ENCODE measurements at regions of chr12 and their contacts with region 1.

Region 1: GRCh38 chr12:57418255-57418654 is 12.6 kb downstream of the R3HDM2 start:
- DNase-seq: no peak
- H3K4me3 Mint-ChIP-seq: no peak overlapping the region
- H3K27ac Mint-ChIP-seq: no peak overlapping the region
- H3K4me1 Mint-ChIP-seq: peaks cover 27% of the 10 kb centered on the region
- H3K27me3 Mint-ChIP-seq: no peaks in the 10 kb centered on the region
- CTCF ChIP-seq: no peak

Region 2: DNA sequence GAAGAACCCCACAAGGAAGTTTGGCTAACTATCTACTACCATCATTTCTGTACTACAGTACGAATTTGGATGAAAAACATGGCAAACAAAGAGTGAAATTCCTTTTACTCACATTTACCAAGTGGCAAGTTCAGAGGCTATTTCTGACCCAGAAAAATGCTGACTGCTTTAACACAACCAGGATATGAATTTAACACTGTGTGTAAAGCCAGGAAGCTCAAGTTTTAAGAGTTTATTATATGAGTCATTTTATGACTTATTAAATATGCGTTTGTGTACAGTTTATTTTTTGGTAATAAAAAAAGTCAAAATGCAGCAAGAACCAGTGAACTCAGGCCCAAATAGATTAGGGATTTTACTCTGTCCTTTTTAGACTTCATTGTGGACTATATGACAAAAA is 108.8 kb before region 1 on chr12:
- CTCF ChIA-PET with region 1: interaction called, 12 read pairs
- POLR2A ChIA-PET with region 1: no interaction called
- intact Hi-C with region 1: no loop called
- DNase-seq: no peak
- H3K4me3 Mint-ChIP-seq: no peak overlapping the region
- H3K27ac Mint-ChIP-seq: peak overlapping the region; percentile 66
- H3K4me1 Mint-ChIP-seq: peaks cover 13% of the 10 kb centered on the region
- H3K27me3 Mint-ChIP-seq: no peaks in the 10 kb centered on the region
- CTCF ChIP-seq: no peak

Region 3: GRCh38 chr12:57368349-57369095 is 49.7 kb before region 1 on chr12:
- CTCF ChIA-PET with region 1: no interaction called
- POLR2A ChIA-PET with region 1: no interaction called
- intact Hi-C with region 1: no loop called
- DNase-seq: peak; percentile 24
- H3K4me3 Mint-ChIP-seq: no peak overlapping the region
- H3K27ac Mint-ChIP-seq: no peak overlapping the region
- H3K4me1 Mint-ChIP-seq: no peaks in the 10 kb centered on the region
- H3K27me3 Mint-ChIP-seq: no peaks in the 10 kb centered on the region
- CTCF ChIP-seq: no peak

Region 4: DNA sequence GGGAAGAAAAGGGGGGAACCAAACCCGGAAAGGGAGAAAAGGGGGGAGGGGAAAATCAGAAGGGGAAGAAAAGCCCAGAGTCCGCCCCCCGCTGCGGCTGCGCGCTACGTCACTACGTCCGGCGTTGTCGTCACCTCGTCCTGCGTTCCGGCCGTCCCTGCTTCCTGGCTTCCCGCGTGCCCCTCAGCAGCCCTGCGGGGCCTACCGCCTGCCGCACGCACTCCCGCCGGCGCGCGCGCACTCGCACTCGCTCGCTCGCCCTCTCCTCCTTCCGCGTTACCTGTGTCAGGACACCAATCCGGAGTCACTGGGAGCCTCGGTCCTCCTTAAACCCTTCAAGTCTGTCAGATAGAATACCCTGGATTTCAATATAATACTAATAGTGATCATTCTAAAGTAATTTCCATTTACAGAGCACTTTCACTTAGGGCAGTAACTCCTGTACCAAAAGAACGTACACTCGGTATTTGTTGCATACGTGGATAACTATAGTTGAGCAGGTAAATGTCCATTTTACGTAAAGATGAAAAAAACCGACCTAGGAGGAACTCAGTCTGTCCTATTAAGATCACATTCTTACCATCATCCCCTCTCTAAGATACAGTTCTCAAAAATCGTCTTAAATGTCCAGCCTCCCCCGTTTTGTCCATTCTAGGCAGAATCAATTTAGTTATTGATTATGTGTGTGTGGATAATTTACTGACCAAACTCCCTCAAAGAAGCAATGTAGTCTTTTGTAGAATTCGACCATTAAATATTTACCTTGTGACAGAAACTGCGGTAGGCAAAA is 12.9 kb after region 1 on chr12 and contains the start of gene R3HDM2:
- CTCF ChIA-PET with region 1: interaction called, 10 read pairs
- POLR2A ChIA-PET with region 1: interaction called, 3 read pairs
- intact Hi-C with region 1: no loop called
- DNase-seq: peak; percentile 93
- H3K4me3 Mint-ChIP-seq: peak within 1 kb of the TSS; percentile 81
- H3K27ac Mint-ChIP-seq: peak within 1 kb of the TSS; percentile 95
- H3K4me1 Mint-ChIP-seq: peaks cover 6% of the 10 kb centered on the region
- H3K27me3 Mint-ChIP-seq: no peaks in the 10 kb centered on the region
- CTCF ChIP-seq: no peak
- total RNA-seq, gene R3HDM2: 53.9 and 64.8 TPM in 2 replicates